Activated CD8-positive, alpha-beta T cell treated with anti-CD3 and anti-CD28 coated beads, Interleukin-2, amount 10 ng/mL, durations not matched to agents 7 days and 5 days (primary cell): ENCODE measurements at regions of chr5 and their contacts with region 1.

Region 1: DNA sequence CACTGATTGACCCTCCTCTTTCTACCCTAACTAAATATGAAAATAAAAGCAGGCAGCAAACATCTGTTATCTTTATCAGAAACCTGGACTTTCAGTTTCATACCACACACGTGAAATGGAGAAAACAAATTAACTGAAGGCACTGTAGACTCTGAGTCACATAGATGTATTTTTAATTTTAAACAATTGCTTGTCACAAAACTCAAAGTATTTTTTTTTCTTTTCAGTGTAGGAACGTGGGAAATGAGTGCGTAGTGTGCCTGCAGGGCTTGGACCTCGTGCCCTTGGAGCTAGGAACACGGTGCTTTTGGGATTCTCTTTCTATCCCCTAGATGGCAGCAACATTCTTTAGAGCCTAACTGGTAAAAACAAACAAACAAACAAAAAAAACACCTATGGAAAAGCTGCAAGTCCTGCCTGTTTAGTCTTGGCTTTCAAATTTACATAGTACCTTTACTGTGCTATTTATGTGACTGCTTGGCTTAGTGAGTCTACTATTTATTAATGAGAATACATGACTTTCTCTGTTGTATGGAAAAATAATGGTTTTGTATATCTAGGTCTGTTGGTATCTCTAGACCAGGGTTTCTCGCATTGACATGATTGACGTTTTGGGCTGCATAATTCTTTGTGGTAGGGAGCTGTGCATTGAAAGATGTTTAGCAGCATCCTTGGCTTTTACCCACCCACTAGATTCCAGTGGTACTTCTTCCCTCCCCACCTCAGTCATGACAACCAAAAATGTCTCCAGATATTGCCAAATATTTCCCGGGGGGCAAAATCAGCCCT is 16.8 kb upstream of the ACTBL2 start:
- DNase-seq: peak; percentile 26
- ATAC-seq: peak; percentile 70
- H3K4me3 Mint-ChIP-seq: peak overlapping the region; percentile 54
- H3K27ac Mint-ChIP-seq: no peak overlapping the region
- H3K4me1 Mint-ChIP-seq: peaks cover 33% of the 10 kb centered on the region
- H3K27me3 Mint-ChIP-seq: peaks cover 14% of the 10 kb centered on the region

Region 2: DNA sequence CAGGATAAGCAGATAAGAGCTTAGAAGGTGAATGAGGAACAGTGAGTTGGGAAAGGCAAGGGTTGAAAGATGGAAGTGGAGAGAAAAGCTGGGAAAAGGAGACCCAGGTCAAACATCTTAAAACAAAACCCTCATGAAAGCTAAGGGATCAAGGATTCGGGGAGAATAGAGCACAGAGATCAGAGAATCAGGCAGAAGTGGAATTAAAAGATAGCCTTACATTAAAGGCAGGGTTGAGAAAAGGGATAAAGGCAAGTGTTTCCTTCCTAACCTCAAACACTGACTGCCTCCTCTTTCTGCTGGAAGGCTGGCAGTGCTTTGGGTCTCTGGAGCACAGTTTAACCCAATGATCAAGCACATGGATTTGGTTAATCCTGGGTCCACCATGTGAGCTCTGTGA is 11.9 kb after region 1 on chr5:
- CTCF ChIA-PET with region 1: interaction called, 12 read pairs
- POLR2A ChIA-PET with region 1: no interaction called
- DNase-seq: no peak
- ATAC-seq: no peak
- H3K4me3 Mint-ChIP-seq: no peak overlapping the region
- H3K27ac Mint-ChIP-seq: no peak overlapping the region
- H3K4me1 Mint-ChIP-seq: no peaks in the 10 kb centered on the region
- H3K27me3 Mint-ChIP-seq: peaks cover 24% of the 10 kb centered on the region